A673 (cell line): ENCODE measurements at regions of chr10 and their contacts with region 1.

Region 1: GRCh38 chr10:16673443-16673842 is 143.8 kb downstream of the RSU1 start:
- DNase-seq: no peak
- H3K4me3 ChIP-seq: no peak overlapping the region
- H3K27ac ChIP-seq: no peak overlapping the region
- H3K4me1 ChIP-seq: no peaks in the 10 kb centered on the region
- H3K27me3 ChIP-seq: no peaks in the 10 kb centered on the region
- CTCF ChIP-seq: no peak

Region 2: DNA sequence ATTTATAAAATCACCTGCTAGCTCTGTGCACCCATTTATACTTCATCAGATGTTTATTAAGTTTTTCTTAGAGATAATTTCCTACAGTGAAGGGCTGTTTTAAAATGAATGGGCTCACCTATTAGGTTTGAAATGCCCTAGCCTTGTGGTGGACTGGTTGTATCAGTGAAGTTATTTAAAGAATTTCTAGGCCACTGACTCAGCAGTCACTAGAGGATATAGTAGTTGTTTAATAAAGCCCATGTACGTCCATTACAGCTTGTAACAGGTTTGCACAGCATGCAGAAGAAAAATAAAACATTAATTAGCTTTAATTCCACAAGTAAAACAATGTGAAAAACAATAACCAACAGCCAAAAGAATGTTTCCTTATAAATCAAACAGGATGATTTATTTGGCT is 15.8 kb after region 1 on chr10:
- CTCF ChIA-PET with region 1: no interaction called
- POLR2A ChIA-PET with region 1: no interaction called
- intact Hi-C with region 1: loop called (anchors 1 kb)
- DNase-seq: no peak
- H3K4me3 ChIP-seq: no peak overlapping the region
- H3K27ac ChIP-seq: no peak overlapping the region
- H3K4me1 ChIP-seq: no peaks in the 10 kb centered on the region
- H3K27me3 ChIP-seq: no peaks in the 10 kb centered on the region
- CTCF ChIP-seq: no peak